Activated B cell treated with CpG ODN at 0.5 μM for 24 hours (primary cell): ENCODE measurements at regions of chr9 and their contacts with region 1.

Region 1: DNA sequence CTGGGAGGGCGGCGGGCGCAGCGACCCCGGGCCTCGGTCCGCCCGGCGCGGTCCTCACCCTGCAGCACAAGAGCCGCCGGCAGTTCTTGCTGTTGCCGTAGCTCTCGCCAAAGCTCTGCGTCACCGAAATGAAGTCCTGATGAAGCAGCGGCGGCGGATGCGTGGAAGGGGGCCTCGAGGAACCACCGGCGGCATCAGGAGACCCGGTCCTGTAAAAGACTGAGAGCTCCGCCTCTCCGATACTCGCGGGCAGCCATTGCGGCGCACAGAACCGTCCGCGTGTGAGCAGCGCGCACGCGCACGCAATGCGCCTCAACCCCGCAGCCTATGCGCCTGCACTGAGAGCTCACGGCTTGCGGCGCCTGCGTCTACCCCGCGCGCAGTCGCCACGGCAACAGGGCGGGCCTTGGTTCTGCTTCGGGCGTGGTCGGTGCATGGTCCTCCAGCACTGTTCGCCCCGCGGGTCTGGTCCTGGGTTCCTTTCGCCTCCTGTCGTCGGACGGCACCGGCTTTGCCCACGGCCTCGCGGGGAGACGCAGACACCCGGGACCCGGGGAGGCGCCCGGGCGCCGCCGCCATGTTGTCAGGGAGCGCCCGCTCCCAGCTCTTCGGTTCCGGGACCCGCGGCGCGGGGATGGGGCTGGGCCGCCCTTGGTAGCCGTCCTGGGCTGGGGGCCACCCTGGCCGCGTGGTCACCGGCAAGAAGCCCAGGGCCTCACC is 9.3 kb upstream of the GRIN1 start:
- DNase-seq: peak; percentile 88
- ATAC-seq: peak; percentile 95
- H3K4me3 Mint-ChIP-seq: peak overlapping the region; percentile 82
- H3K27ac Mint-ChIP-seq: peak overlapping the region; percentile 80
- H3K4me1 Mint-ChIP-seq: peaks cover 32% of the 10 kb centered on the region
- H3K27me3 Mint-ChIP-seq: peaks cover 2% of the 10 kb centered on the region
- CTCF ChIP-seq: no peak

Region 2: GRCh38 chr9:137046098-137046787 is 83.4 kb before region 1 on chr9 and contains the start of gene NPDC1:
- CTCF ChIA-PET with region 1: interaction called, 4 read pairs
- POLR2A ChIA-PET with region 1: interaction called, 3 read pairs
- intact Hi-C with region 1: loop called (anchors 10 kb)
- DNase-seq: peak; percentile 76
- ATAC-seq: peak; percentile 93
- H3K4me3 Mint-ChIP-seq: peak within 1 kb of the TSS; percentile 2
- H3K27ac Mint-ChIP-seq: no peak within 1 kb of the TSS
- H3K4me1 Mint-ChIP-seq: peaks cover 16% of the 10 kb centered on the region
- H3K27me3 Mint-ChIP-seq: peaks cover 34% of the 10 kb centered on the region
- CTCF ChIP-seq: peak; percentile 72
- total RNA-seq, gene NPDC1: 0.18 TPM in 1 of 2 replicates, not detected in the other

Region 3: GRCh38 chr9:137114610-137115391 is 14.8 kb before region 1 on chr9 and contains the start of gene DPP7:
- CTCF ChIA-PET with region 1: interaction called, 3 read pairs
- POLR2A ChIA-PET with region 1: interaction called, 10 read pairs
- intact Hi-C with region 1: loop called (anchors 1 kb)
- DNase-seq: peak; percentile 84
- ATAC-seq: peak; percentile 91
- H3K4me3 Mint-ChIP-seq: peak within 1 kb of the TSS; percentile 74
- H3K27ac Mint-ChIP-seq: no peak within 1 kb of the TSS
- H3K4me1 Mint-ChIP-seq: peaks cover 21% of the 10 kb centered on the region
- H3K27me3 Mint-ChIP-seq: no peaks in the 10 kb centered on the region
- CTCF ChIP-seq: no peak
- total RNA-seq, gene DPP7: 254 and 259 TPM in 2 replicates

Region 4: GRCh38 chr9:137168905-137169856 is 39.6 kb after region 1 on chr9:
- CTCF ChIA-PET with region 1: no interaction called
- POLR2A ChIA-PET with region 1: interaction called, 5 read pairs
- intact Hi-C with region 1: loop called (anchors 5 kb)
- DNase-seq: no peak
- ATAC-seq: peak; percentile 26
- H3K4me3 Mint-ChIP-seq: peak overlapping the region; percentile 66
- H3K27ac Mint-ChIP-seq: no peak overlapping the region
- H3K4me1 Mint-ChIP-seq: peaks cover 8% of the 10 kb centered on the region
- H3K27me3 Mint-ChIP-seq: peaks cover 16% of the 10 kb centered on the region
- CTCF ChIP-seq: no peak

Region 5: GRCh38 chr9:137200311-137201204 is 70.9 kb after region 1 on chr9 and contains the start of gene TPRN:
- CTCF ChIA-PET with region 1: no interaction called
- POLR2A ChIA-PET with region 1: interaction called, 13 read pairs
- intact Hi-C with region 1: loop called (anchors 2 kb)
- DNase-seq: peak; percentile 92
- ATAC-seq: peak; percentile 95
- H3K4me3 Mint-ChIP-seq: peak within 1 kb of the TSS; percentile 83
- H3K27ac Mint-ChIP-seq: peak within 1 kb of the TSS; percentile 79
- H3K4me1 Mint-ChIP-seq: peaks cover 39% of the 10 kb centered on the region
- H3K27me3 Mint-ChIP-seq: no peaks in the 10 kb centered on the region
- CTCF ChIP-seq: no peak
- total RNA-seq, gene TPRN: 9.3 and 11.4 TPM in 2 replicates

Region 6: GRCh38 chr9:137578518-137579258 is 449.1 kb after region 1 on chr9 and contains the start of gene DPH7:
- CTCF ChIA-PET with region 1: no interaction called
- POLR2A ChIA-PET with region 1: interaction called, 10 read pairs
- intact Hi-C with region 1: no loop called
- DNase-seq: peak; percentile 98
- ATAC-seq: peak; percentile 97
- H3K4me3 Mint-ChIP-seq: peak within 1 kb of the TSS; percentile 82
- H3K27ac Mint-ChIP-seq: peak within 1 kb of the TSS; percentile 35
- H3K4me1 Mint-ChIP-seq: peaks cover 41% of the 10 kb centered on the region
- H3K27me3 Mint-ChIP-seq: no peaks in the 10 kb centered on the region
- CTCF ChIP-seq: peak; percentile 59
- total RNA-seq, gene DPH7: 39.4 and 43.0 TPM in 2 replicates